Activated CD8-positive, alpha-beta T cell treated with anti-CD3 and anti-CD28 coated beads for 36 hours (primary cell): ENCODE measurements at regions of chr7 and their contacts with region 1.

Region 1: GRCh38 chr7:107754642-107755041 is 10.7 kb downstream of the CBLL1 start:
- DNase-seq: no peak
- ATAC-seq: no peak
- H3K4me3 Mint-ChIP-seq: no peak overlapping the region
- H3K27ac Mint-ChIP-seq: peak overlapping the region; percentile 20
- H3K4me1 Mint-ChIP-seq: peaks cover 10% of the 10 kb centered on the region
- H3K27me3 Mint-ChIP-seq: no peaks in the 10 kb centered on the region
- CTCF ChIP-seq: no peak

Region 2: DNA sequence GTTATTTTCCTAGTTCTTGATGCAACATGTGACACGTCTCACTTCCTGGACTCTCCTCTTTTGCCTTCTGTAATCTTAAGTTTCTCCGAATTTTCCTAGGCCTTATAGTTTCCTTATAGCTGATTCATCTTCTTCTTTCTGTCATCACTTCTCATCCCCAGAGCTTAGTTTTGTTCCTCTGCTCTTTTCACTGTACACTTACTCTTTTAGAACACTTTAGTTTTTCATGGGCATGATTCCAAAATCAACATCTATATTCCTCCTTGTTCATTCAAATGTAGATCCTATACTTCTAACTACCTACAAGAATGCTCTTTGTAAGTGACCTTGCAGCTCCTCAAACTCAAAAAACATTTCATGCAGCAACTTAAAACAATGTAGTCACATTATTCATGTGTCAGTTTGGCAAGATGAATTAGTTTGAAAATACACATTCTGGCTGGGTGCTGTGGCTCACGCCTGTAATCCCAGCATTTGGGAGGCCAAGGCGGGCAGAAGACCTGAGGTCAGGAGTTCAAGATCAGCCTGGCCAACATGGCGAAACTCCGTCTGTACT is 61.4 kb after region 1 on chr7:
- CTCF ChIA-PET with region 1: no interaction called
- POLR2A ChIA-PET with region 1: no interaction called
- intact Hi-C with region 1: loop called (anchors 5 kb)
- DNase-seq: no peak
- ATAC-seq: no peak
- H3K4me3 Mint-ChIP-seq: no peak overlapping the region
- H3K27ac Mint-ChIP-seq: peak overlapping the region; percentile 86
- H3K4me1 Mint-ChIP-seq: peaks cover 28% of the 10 kb centered on the region
- H3K27me3 Mint-ChIP-seq: no peaks in the 10 kb centered on the region
- CTCF ChIP-seq: no peak